T-cell (primary cell): ENCODE measurements at regions of chr15 and their contacts with region 1.

Region 1: GRCh38 chr15:68154923-68155559 is 50.1 kb downstream of the CALML4 start:
- DNase-seq: peak in 18 of 35 experiments; percentile 3 to 49 (median 14)
- ATAC-seq: no peak
- H3K4me3 ChIP-seq: no peak overlapping the region
- H3K4me3 Mint-ChIP-seq: no peak overlapping the region
- H3K27ac ChIP-seq: no peak overlapping the region
- H3K27ac Mint-ChIP-seq: no peak overlapping the region
- H3K4me1 ChIP-seq: no peaks in the 10 kb centered on the region
- H3K4me1 Mint-ChIP-seq: peaks cover 3 to 8% (median 5%) of the 10 kb centered on the region in 3 donors
- H3K27me3 ChIP-seq: no peaks in the 10 kb centered on the region
- H3K27me3 Mint-ChIP-seq: no peaks in the 10 kb centered on the region

Region 2: GRCh38 chr15:67863442-67863987 is 291.5 kb before region 1 on chr15:
- CTCF ChIA-PET with region 1: interaction called, 5 to 14 read pairs
- POLR2A ChIA-PET with region 1: no interaction called
- DNase-seq: peak; percentile 43 to 80 (median 62)
- ATAC-seq: peak; percentile 98 to 100 (median 99)
- H3K4me3 ChIP-seq: peak overlapping the region; percentile 36 to 42
- H3K4me3 Mint-ChIP-seq: peak overlapping the region in 2 of 3 donors; percentile 43 to 67
- H3K27ac ChIP-seq: no peak overlapping the region
- H3K27ac Mint-ChIP-seq: peak overlapping the region in 1 of 2 donors; percentile 31
- H3K4me1 ChIP-seq: peaks cover 0 to 9% of the 10 kb centered on the region in 2 experiments
- H3K4me1 Mint-ChIP-seq: peaks cover 3 to 5% (median 4%) of the 10 kb centered on the region in 3 donors
- H3K27me3 ChIP-seq: peaks cover 0 to 16% of the 10 kb centered on the region in 2 experiments
- H3K27me3 Mint-ChIP-seq: peaks cover 4 to 21% of the 10 kb centered on the region in 2 donors

Region 3: GRCh38 chr15:68143129-68143528 is 11.9 kb before region 1 on chr15:
- CTCF ChIA-PET with region 1: no interaction called
- POLR2A ChIA-PET with region 1: no interaction called
- DNase-seq: no peak
- ATAC-seq: no peak
- H3K4me3 ChIP-seq: no peak overlapping the region
- H3K4me3 Mint-ChIP-seq: no peak overlapping the region
- H3K27ac ChIP-seq: no peak overlapping the region
- H3K27ac Mint-ChIP-seq: no peak overlapping the region
- H3K4me1 ChIP-seq: no peaks in the 10 kb centered on the region
- H3K4me1 Mint-ChIP-seq: peaks cover 36 to 42% (median 40%) of the 10 kb centered on the region in 3 donors
- H3K27me3 ChIP-seq: no peaks in the 10 kb centered on the region
- H3K27me3 Mint-ChIP-seq: no peaks in the 10 kb centered on the region

Region 4: GRCh38 chr15:68192804-68193486 is 37.9 kb after region 1 on chr15:
- CTCF ChIA-PET with region 1: no interaction called
- POLR2A ChIA-PET with region 1: interaction called in 1 of 2 experiments, 13 read pairs
- DNase-seq: no peak
- ATAC-seq: no peak
- H3K4me3 ChIP-seq: no peak overlapping the region
- H3K4me3 Mint-ChIP-seq: no peak overlapping the region
- H3K27ac ChIP-seq: no peak overlapping the region
- H3K27ac Mint-ChIP-seq: peak overlapping the region; percentile 8 to 62
- H3K4me1 ChIP-seq: no peaks in the 10 kb centered on the region
- H3K4me1 Mint-ChIP-seq: no peaks in the 10 kb centered on the region
- H3K27me3 ChIP-seq: no peaks in the 10 kb centered on the region
- H3K27me3 Mint-ChIP-seq: no peaks in the 10 kb centered on the region

Region 5: GRCh38 chr15:68463444-68463843 is 308.4 kb after region 1 on chr15:
- CTCF ChIA-PET with region 1: no interaction called
- POLR2A ChIA-PET with region 1: no interaction called
- DNase-seq: no peak
- ATAC-seq: no peak
- H3K4me3 ChIP-seq: no peak overlapping the region
- H3K4me3 Mint-ChIP-seq: no peak overlapping the region
- H3K27ac ChIP-seq: no peak overlapping the region
- H3K27ac Mint-ChIP-seq: no peak overlapping the region
- H3K4me1 ChIP-seq: no peaks in the 10 kb centered on the region
- H3K4me1 Mint-ChIP-seq: no peaks in the 10 kb centered on the region
- H3K27me3 ChIP-seq: peaks cover 0 to 5% of the 10 kb centered on the region in 2 experiments
- H3K27me3 Mint-ChIP-seq: peaks cover 7 to 20% of the 10 kb centered on the region in 2 donors